ENCODE measurements at regions of chr6 and their contacts with region 1.

Region 1: GRCh38 chr6:46170357-46171289 is at the start of gene ENPP5:
- DNase-seq: peak; percentile 85 to 94
- H3K4me3 ChIP-seq: peak within 1 kb of the TSS; percentile 67
- H3K27ac ChIP-seq: no peak within 1 kb of the TSS
- H3K4me1 ChIP-seq: peaks cover 9% of the 10 kb centered on the region
- H3K27me3 ChIP-seq: no peaks in the 10 kb centered on the region
- CTCF ChIP-seq: no peak
- total RNA-seq, gene ENPP5: 8.0 and 9.1 TPM in 2 replicates

Region 2: DNA sequence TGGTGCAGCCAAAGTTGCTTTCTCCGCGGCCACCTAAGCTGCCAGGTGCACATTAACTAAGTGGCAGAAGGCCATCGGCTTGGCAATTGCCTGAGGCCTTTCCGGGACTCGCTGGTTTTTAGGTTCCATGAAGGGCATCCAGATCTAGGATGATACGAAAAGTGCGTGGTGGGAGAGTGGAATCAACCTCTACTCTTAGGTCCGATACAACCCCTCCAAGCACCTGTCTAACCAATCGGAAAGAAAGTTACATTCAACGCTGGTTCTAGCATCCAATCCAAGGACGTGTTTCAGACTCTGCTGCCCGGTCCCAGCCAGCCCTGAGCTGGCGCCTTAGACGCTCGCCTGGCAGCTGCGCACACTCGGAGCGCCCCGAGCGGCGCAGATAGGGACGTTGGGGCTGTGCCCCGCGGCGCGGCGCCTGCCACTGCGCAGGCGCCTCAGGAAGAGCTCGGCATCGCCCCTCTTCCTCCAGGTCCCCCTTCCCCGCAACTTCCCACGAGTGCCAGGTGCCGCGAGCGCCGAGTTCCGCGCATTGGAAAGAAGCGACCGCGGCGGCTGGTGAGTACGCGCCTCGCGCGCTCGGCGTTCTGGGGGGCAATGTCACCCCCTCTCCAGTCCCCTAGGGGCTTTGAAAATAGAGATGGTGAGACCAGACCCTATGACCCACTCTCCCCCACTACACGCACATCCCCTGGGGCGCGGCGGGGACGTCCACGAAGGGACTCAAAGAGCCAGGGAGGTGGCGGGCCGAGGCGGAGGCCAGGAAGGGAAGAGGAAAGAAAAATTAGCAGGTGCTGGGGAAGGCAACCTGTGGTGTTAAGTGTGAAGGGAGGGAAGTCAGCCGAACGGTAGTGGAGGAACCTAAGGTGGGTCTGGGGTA is 40.8 kb before region 1 on chr6 and contains the start of gene ENPP4:
- CTCF ChIA-PET with region 1: no interaction called
- POLR2A ChIA-PET with region 1: interaction called, 20 read pairs
- intact Hi-C with region 1: no loop called
- DNase-seq: peak; percentile 89 to 92
- H3K4me3 ChIP-seq: peak within 1 kb of the TSS; percentile 61
- H3K27ac ChIP-seq: no peak within 1 kb of the TSS
- H3K4me1 ChIP-seq: peaks cover 7% of the 10 kb centered on the region
- H3K27me3 ChIP-seq: no peaks in the 10 kb centered on the region
- CTCF ChIP-seq: no peak
- total RNA-seq, gene ENPP4: 6.2 and 7.1 TPM in 2 replicates

Region 3: DNA sequence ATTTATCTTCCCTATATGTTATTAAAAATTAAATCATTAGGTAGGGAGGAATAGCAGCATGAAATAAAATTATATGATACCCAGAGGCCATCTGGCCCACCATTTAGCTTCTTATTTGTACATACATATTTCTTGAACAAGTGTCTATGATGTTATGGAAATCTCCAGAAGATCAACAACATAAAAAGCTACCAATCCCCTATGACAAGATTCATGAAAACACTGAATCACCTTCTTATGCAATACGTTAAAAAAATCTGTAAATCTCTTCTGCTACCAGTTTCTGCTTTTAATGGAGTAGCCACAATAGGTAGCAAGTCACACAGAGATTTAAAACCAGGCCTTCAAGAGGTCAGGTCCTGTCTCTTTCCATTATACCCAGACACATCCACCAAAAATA is 126.0 kb after region 1 on chr6:
- CTCF ChIA-PET with region 1: no interaction called
- POLR2A ChIA-PET with region 1: no interaction called
- intact Hi-C with region 1: no loop called
- DNase-seq: no peak
- H3K4me3 ChIP-seq: no peak overlapping the region
- H3K27ac ChIP-seq: no peak overlapping the region
- H3K4me1 ChIP-seq: no peaks in the 10 kb centered on the region
- H3K27me3 ChIP-seq: no peaks in the 10 kb centered on the region
- CTCF ChIP-seq: no peak